Calu3 (cell line): ENCODE measurements at regions of chr1 and their contacts with region 1.

Region 1: GRCh38 chr1:173050865-173051264 is at the start of gene TNFSF18:
- DNase-seq: no peak
- H3K4me3 Mint-ChIP-seq: no peak within 1 kb of the TSS
- H3K27ac Mint-ChIP-seq: peak within 1 kb of the TSS; percentile 59
- H3K4me1 Mint-ChIP-seq: peaks cover 54% of the 10 kb centered on the region
- H3K27me3 Mint-ChIP-seq: no peaks in the 10 kb centered on the region
- CTCF ChIP-seq: no peak
- total RNA-seq, gene TNFSF18: not detected in 2 replicates

Region 2: DNA sequence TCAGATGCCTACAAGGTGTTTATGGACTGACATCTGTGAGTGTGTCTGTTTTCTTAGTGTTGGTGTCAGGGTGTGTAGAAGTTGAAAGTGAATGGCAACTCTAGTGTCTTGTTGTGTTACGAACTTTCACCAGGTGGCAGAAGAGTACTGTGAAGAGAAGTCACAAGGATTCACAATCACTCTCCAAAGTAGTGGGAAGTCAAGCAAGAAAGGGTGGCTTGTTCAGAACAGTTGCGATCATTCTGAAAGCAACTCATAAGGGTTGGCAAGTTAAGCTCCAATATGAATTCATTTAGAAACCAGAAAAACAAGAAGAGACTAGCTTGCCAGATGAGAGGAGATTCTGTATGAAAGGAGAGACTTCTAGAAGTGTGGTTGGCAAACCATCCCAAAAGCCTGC is 305.9 kb before region 1 on chr1:
- CTCF ChIA-PET with region 1: no interaction called
- intact Hi-C with region 1: loop called (anchors 10 kb)
- DNase-seq: peak; percentile 64
- H3K4me3 Mint-ChIP-seq: peak overlapping the region; percentile 17
- H3K27ac Mint-ChIP-seq: peak overlapping the region; percentile 80
- H3K4me1 Mint-ChIP-seq: peaks cover 33% of the 10 kb centered on the region
- H3K27me3 Mint-ChIP-seq: no peaks in the 10 kb centered on the region
- CTCF ChIP-seq: peak; percentile 66

Region 3: DNA sequence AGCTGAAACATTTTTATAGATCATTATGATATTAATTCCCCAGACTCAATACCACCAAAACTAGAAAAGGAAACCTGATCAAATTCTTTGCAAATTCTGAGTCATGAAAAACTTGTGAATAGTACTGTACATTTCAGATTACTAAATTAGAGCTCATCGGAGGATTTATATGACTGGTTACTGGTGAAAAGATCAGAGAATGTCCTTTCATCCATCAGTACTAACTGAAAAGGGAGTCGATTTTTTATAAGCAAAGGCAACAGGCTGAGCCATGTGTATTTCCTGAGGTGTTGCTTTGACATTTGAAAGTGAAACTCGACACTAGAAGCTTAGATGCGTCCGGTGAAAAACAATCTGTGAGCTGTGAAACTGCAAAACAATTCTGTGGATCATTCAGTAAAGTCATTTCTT is 155.8 kb before region 1 on chr1:
- CTCF ChIA-PET with region 1: no interaction called
- intact Hi-C with region 1: loop called (anchors 10 kb)
- DNase-seq: no peak
- H3K4me3 Mint-ChIP-seq: peak overlapping the region; percentile 11
- H3K27ac Mint-ChIP-seq: peak overlapping the region; percentile 12
- H3K4me1 Mint-ChIP-seq: peaks cover 58% of the 10 kb centered on the region
- H3K27me3 Mint-ChIP-seq: no peaks in the 10 kb centered on the region
- CTCF ChIP-seq: no peak

Region 4: DNA sequence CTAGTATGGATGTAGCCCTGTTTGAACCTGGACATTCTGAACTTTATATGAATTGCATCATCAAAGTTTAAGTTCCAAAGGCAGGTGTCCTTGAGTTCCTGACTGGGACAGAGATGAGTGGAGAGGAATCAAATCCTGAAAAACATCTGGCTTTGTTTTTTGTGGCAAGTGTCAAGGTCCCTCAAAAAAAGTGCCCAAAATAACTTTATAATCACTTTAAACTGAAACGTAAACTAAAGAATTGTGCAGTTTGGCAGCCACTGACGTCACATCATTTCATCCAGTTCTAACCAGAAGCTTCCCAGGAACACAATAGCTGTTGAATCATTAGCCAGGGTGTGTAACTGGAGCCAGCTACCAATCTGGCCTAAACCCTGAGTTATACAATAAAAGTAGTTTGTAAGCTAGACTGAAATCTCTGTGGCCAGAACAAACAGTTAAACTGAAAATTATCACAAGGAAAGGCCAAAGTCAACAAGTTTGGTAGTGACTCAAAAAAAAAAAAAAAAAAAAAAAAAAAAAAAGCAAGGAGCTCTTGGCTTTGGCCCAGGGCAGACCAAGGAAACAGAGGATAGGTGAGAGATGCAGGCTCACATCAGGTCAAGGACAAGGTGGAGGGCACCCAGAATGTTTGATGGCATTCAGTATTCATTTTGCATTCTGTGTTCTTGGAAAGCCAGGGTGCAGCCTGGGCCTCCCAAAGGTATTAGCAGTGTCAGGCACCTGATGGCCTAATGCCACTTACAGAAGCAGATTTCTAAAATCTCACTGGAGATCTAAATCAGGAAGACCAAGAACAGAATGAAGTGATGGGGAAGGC is 74.4 kb before region 1 on chr1:
- CTCF ChIA-PET with region 1: no interaction called
- intact Hi-C with region 1: loop called (anchors 2 kb)
- DNase-seq: peak; percentile 71
- H3K4me3 Mint-ChIP-seq: no peak overlapping the region
- H3K27ac Mint-ChIP-seq: peak overlapping the region; percentile 72
- H3K4me1 Mint-ChIP-seq: peaks cover 53% of the 10 kb centered on the region
- H3K27me3 Mint-ChIP-seq: no peaks in the 10 kb centered on the region
- CTCF ChIP-seq: no peak

Region 5: DNA sequence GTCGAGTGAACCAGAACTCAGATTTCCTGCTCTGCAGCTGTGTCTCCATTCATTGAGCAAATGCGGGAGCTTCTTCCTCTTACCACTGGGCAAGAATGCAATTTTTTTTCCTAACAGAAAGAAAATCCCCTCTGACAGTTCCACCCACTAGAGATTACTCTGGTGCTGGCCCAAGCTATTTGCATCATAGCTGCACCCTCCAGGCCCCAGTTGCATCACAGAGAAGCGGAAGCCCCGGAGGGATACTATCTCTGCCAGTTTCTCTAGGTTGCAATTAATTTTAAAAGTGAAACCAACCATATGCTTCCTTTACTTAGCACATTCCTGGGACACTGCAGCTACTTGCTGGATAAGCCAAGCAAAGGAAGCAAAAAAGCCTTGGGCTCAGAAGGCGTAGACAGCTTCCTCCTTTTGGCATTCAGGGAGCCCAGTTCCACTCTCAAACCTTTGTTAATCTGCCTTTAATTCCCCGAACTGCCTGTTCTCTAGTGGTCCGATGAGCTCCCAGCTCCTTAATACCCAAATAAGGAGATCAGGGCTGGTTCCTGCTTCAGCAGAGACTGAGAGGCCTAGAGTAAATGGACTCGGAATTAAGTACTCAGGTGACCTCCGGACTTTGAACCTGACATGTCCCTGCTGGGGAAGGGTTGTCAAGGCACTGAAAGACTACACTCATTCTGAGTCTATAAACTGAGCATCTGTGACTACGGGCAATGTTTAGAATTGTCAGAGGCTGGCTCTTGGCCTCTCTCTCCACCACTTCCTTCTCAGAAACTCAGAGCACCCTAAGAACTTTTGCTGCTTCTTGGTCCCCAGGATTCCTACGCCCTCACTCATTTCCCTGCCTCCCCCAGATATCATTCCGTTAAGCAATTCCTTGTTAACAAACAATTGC is 72.3 kb after region 1 on chr1:
- CTCF ChIA-PET with region 1: no interaction called
- intact Hi-C with region 1: loop called (anchors 2 kb)
- DNase-seq: peak; percentile 55
- H3K4me3 Mint-ChIP-seq: peak overlapping the region; percentile 65
- H3K27ac Mint-ChIP-seq: peak overlapping the region; percentile 88
- H3K4me1 Mint-ChIP-seq: peaks cover 50% of the 10 kb centered on the region
- H3K27me3 Mint-ChIP-seq: no peaks in the 10 kb centered on the region
- CTCF ChIP-seq: no peak

Region 6: DNA sequence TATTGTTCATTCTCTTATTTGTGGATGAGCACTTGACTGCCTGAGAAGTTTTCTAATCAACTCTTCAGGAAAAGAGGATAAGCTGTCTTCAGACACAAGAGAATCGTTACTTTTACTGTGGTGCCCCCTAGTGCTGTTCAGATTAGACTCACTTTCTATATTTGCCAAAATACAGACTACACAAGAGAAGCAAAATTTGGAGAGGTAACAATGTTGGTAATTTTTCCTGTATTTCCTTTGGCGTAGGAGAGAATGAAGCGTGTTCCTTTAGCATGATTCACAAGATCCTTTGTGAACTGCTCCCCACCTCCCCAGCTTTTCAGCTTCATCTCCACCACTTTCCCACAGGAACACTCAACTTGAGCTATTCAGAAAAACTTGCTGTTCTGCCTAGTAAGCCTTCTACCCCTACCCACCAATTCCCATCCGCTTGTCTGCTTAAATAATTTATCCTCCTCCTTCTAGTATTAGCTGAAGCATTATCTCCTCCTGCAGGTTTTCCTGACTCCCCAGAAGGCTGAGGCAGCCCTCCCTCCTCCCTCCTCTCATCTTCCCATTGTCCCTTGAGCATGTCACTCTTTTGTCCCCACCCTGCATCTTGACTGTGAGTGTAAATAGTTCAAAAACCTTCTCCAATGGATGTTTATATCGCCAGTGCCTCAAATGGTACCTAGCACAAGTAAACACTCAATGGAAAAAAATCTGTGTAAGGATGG is 151.7 kb after region 1 on chr1:
- CTCF ChIA-PET with region 1: no interaction called
- intact Hi-C with region 1: loop called (anchors 5 kb)
- DNase-seq: peak; percentile 61
- H3K4me3 Mint-ChIP-seq: no peak overlapping the region
- H3K27ac Mint-ChIP-seq: no peak overlapping the region
- H3K4me1 Mint-ChIP-seq: peaks cover 19% of the 10 kb centered on the region
- H3K27me3 Mint-ChIP-seq: no peaks in the 10 kb centered on the region
- CTCF ChIP-seq: peak; percentile 72